Endothelial cell of umbilical vein (primary cell): ENCODE measurements at regions of chr3 and their contacts with region 1.

Region 1: GRCh38 chr3:25856902-25857518 is 67.1 kb downstream of the OXSM start:
- DNase-seq: peak; percentile 43
- H3K4me3 ChIP-seq: no peak overlapping the region
- H3K27ac ChIP-seq: no peak overlapping the region
- H3K4me1 ChIP-seq: peaks cover 18% of the 10 kb centered on the region
- H3K27me3 ChIP-seq: no peaks in the 10 kb centered on the region
- CTCF ChIP-seq: peak; percentile 52 to 68
- POLR2A ChIP-seq: no peak

Region 2: GRCh38 chr3:24773798-24774197 is 1083.2 kb before region 1 on chr3:
- CTCF ChIA-PET with region 1: interaction called, 10 read pairs
- POLR2A ChIA-PET with region 1: no interaction called
- dilution Hi-C with region 1: no loop called
- intact Hi-C with region 1: loop called (anchors 5 kb)
- DNase-seq: peak; percentile 61
- H3K4me3 ChIP-seq: no peak overlapping the region
- H3K27ac ChIP-seq: no peak overlapping the region
- H3K4me1 ChIP-seq: no peaks in the 10 kb centered on the region
- H3K27me3 ChIP-seq: no peaks in the 10 kb centered on the region
- CTCF ChIP-seq: peak; percentile 69 to 71
- POLR2A ChIP-seq: no peak

Region 3: GRCh38 chr3:25633919-25634318 is 223.1 kb before region 1 on chr3:
- CTCF ChIA-PET with region 1: interaction called, 13 read pairs
- POLR2A ChIA-PET with region 1: no interaction called
- dilution Hi-C with region 1: no loop called
- intact Hi-C with region 1: no loop called
- DNase-seq: no peak
- H3K4me3 ChIP-seq: no peak overlapping the region
- H3K27ac ChIP-seq: no peak overlapping the region
- H3K4me1 ChIP-seq: no peaks in the 10 kb centered on the region
- H3K27me3 ChIP-seq: no peaks in the 10 kb centered on the region
- CTCF ChIP-seq: no peak
- POLR2A ChIP-seq: no peak

Region 4: GRCh38 chr3:25664810-25665314 is 192.1 kb before region 1 on chr3 and contains the start of gene TOP2B:
- CTCF ChIA-PET with region 1: interaction called, 6 read pairs
- POLR2A ChIA-PET with region 1: no interaction called
- dilution Hi-C with region 1: no loop called
- intact Hi-C with region 1: loop called (anchors 5 kb)
- DNase-seq: peak; percentile 98
- H3K4me3 ChIP-seq: peak within 1 kb of the TSS; percentile 83 to 98 (median 92)
- H3K27ac ChIP-seq: peak within 1 kb of the TSS; percentile 76
- H3K4me1 ChIP-seq: peaks cover 19% of the 10 kb centered on the region
- H3K27me3 ChIP-seq: no peaks in the 10 kb centered on the region
- CTCF ChIP-seq: no peak
- POLR2A ChIP-seq: peak; percentile 24
- total RNA-seq, gene TOP2B: 98.9 and 102 TPM in 2 replicates

Region 5: GRCh38 chr3:25747033-25747432 is 110.0 kb before region 1 on chr3:
- CTCF ChIA-PET with region 1: no interaction called
- POLR2A ChIA-PET with region 1: no interaction called
- dilution Hi-C with region 1: no loop called
- intact Hi-C with region 1: no loop called
- DNase-seq: no peak
- H3K4me3 ChIP-seq: no peak overlapping the region
- H3K27ac ChIP-seq: no peak overlapping the region
- H3K4me1 ChIP-seq: peaks cover 4% of the 10 kb centered on the region
- H3K27me3 ChIP-seq: no peaks in the 10 kb centered on the region
- CTCF ChIP-seq: no peak
- POLR2A ChIP-seq: no peak

Region 6: GRCh38 chr3:25782938-25783660 is 73.9 kb before region 1 on chr3 and contains the start of gene NGLY1:
- CTCF ChIA-PET with region 1: interaction called, 10 read pairs
- POLR2A ChIA-PET with region 1: interaction called, 5 read pairs
- dilution Hi-C with region 1: no loop called
- intact Hi-C with region 1: loop called (anchors 1 kb)
- DNase-seq: peak; percentile 81
- H3K4me3 ChIP-seq: peak within 1 kb of the TSS; percentile 57 to 98 (median 81)
- H3K27ac ChIP-seq: peak within 1 kb of the TSS; percentile 47
- H3K4me1 ChIP-seq: peaks cover 13% of the 10 kb centered on the region
- H3K27me3 ChIP-seq: no peaks in the 10 kb centered on the region
- CTCF ChIP-seq: peak in 1 of 2 donors; percentile 5
- POLR2A ChIP-seq: peak; percentile 89
- total RNA-seq, gene NGLY1: 29.6 and 31.5 TPM in 2 replicates

Region 7: DNA sequence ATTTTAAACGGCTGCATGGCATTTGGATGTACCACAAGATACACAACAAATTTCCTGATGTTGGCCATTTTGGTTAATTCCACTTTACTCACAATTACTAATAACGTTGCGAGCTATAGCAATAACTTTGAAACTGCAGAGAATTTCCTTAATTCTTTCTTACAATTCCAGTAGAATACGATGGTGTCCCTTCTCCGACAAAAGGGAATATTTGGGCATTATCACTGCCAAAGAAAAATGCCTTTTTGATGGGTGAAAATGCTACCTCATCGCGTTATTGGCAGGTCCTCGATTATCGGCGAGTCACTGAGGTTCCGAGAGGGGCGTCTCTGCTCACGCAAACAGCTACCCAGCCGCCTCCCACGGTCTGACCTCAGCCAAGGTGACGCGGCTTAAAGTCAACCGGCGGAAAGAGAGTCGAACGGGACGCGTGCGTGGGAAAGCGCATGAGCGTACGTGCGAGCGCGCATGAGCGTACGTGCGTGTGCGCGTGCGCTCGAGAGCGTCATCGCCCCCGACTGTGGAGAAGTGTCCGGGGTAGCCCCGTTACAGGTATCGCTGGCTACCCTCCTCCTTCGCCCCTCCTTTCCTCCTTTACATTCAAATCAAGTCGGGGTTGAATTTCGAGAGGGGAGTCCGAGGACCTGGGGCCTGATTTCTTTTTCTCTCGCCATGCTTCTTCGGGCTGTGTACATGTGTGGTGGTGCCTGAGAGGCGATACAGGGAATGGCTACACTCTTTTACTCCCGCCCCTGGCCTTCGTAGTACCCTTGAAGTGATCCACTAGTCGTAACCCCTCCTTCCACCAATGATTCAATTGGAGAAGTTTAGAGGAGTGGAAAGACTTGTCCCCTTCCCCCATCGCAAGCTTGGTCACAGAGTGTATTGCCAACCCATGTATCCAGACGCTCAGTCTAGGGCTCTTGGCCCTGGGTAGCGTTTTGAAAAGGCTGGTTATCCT is 67.1 kb before region 1 on chr3 and contains the start of gene OXSM:
- CTCF ChIA-PET with region 1: interaction called, 5 read pairs
- POLR2A ChIA-PET with region 1: no interaction called
- dilution Hi-C with region 1: no loop called
- intact Hi-C with region 1: loop called (anchors 1 kb)
- DNase-seq: peak; percentile 94
- H3K4me3 ChIP-seq: peak within 1 kb of the TSS; percentile 42 to 97 (median 74)
- H3K27ac ChIP-seq: peak within 1 kb of the TSS; percentile 76
- H3K4me1 ChIP-seq: peaks cover 8% of the 10 kb centered on the region
- H3K27me3 ChIP-seq: no peaks in the 10 kb centered on the region
- CTCF ChIP-seq: no peak
- POLR2A ChIP-seq: peak; percentile 95
- total RNA-seq, gene OXSM: 8.0 and 9.0 TPM in 2 replicates

Region 8: DNA sequence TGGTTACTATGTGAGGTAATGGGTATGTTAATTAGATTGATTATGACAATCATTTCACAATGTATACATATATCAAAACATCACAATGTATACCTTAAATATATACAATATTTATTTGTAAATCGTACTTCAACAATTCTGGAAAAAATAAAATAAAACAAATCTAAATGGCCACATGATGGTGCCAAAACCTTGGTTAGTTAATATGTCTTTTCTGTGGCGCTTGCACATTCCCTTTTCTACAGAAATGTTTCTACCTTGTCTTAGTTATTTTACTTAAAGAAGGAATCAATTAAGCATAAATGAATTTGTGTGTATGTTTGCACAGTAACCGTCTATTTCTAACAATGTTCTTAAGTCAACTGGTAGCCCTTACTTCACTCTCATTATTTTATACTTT is 13.7 kb before region 1 on chr3:
- CTCF ChIA-PET with region 1: interaction called, 21 read pairs
- POLR2A ChIA-PET with region 1: no interaction called
- dilution Hi-C with region 1: no loop called
- intact Hi-C with region 1: no loop called
- DNase-seq: no peak
- H3K4me3 ChIP-seq: no peak overlapping the region
- H3K27ac ChIP-seq: no peak overlapping the region
- H3K4me1 ChIP-seq: no peaks in the 10 kb centered on the region
- H3K27me3 ChIP-seq: no peaks in the 10 kb centered on the region
- CTCF ChIP-seq: no peak
- POLR2A ChIP-seq: no peak